ENCODE measurements at regions of chr13 and their contacts with region 1.

Region 1: DNA sequence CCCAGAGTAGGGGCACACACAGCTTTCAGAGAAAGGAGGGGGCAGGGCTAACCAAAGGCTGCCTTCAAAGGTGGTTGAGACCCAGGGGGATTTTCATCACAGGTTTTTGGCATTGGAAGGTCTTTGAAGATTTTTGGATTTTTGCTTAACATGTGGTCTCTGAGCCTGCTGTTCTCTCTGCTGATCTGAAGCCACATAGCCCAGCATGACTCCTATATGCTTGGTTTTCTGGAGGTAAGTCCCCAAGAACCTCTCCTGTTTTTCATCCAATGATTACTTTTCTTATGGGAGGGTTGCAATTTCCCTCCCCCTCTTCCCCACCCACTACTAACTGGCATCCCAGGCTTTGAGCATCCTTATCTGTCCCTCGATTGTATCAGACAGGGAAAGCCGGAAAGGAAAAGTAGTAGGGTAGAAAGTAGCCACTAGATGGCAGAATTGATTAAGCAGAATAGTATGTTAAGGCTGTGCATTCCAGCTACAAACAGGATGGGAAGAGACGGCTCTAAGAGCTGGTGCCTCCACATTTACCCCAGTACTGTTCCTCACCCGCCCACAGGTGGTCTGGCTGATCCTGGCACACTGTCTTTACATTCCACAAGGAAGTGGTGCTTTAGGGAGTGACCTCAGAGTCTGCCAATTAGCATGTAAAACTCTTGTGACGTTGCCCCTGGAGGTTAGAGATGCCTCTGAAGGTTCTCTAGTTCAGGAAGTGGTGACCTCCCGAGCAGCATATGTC is 218.9 kb upstream of the EDNRB start:
- DNase-seq: no peak
- H3K4me3 ChIP-seq: no peak overlapping the region
- H3K27ac ChIP-seq: no peak overlapping the region
- H3K4me1 ChIP-seq: no peaks in the 10 kb centered on the region
- H3K27me3 ChIP-seq: no peaks in the 10 kb centered on the region
- CTCF ChIP-seq: peak; percentile 50 to 67 (median 57)
- EP300 ChIP-seq: no peak
- POLR2A ChIP-seq: no peak

Region 2: DNA sequence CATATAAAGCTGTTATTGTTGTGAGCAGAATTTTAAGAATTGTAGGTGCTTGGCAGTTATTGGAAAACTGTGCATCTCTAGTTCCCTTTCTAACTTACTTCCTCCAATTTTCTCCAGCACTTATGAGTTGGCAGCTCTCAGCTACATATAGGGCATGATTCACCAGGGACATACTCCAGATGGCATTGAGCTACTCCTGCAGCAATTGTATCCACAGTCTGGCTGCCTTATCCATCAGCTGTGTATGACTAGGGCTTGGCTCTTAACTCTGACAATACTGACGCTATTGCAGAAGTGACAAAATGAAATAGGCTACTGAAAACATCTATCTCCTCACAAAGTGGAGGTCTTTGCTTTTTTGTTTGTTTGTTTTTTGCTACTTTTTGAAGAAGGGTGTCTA is 189.1 kb after region 1 on chr13:
- in situ Hi-C with region 1: no loop called
- intact Hi-C with region 1: no loop called
- DNase-seq: no peak
- H3K4me3 ChIP-seq: no peak overlapping the region
- H3K27ac ChIP-seq: no peak overlapping the region
- H3K4me1 ChIP-seq: no peaks in the 10 kb centered on the region
- H3K27me3 ChIP-seq: no peaks in the 10 kb centered on the region
- CTCF ChIP-seq: no peak
- EP300 ChIP-seq: no peak
- POLR2A ChIP-seq: no peak

Region 3: GRCh38 chr13:78958006-78958405 is 820.4 kb after region 1 on chr13:
- in situ Hi-C with region 1: loop called in 1 of 4 experiments (anchors 25 kb)
- intact Hi-C with region 1: no loop called
- DNase-seq: no peak
- H3K4me3 ChIP-seq: no peak overlapping the region
- H3K27ac ChIP-seq: no peak overlapping the region
- H3K4me1 ChIP-seq: no peaks in the 10 kb centered on the region
- H3K27me3 ChIP-seq: no peaks in the 10 kb centered on the region
- CTCF ChIP-seq: no peak
- EP300 ChIP-seq: no peak
- POLR2A ChIP-seq: no peak